ENCODE measurements at regions of chr5 and their contacts with region 1.

Region 1: GRCh38 chr5:56552612-56553268 is 262.6 kb upstream of the MAP3K1 start:
- DNase-seq: no peak

Region 2: GRCh38 chr5:56481428-56482357 is 71.0 kb before region 1 on chr5:
- intact Hi-C with region 1: no loop called
- DNase-seq: peak; percentile 72

Region 3: DNA sequence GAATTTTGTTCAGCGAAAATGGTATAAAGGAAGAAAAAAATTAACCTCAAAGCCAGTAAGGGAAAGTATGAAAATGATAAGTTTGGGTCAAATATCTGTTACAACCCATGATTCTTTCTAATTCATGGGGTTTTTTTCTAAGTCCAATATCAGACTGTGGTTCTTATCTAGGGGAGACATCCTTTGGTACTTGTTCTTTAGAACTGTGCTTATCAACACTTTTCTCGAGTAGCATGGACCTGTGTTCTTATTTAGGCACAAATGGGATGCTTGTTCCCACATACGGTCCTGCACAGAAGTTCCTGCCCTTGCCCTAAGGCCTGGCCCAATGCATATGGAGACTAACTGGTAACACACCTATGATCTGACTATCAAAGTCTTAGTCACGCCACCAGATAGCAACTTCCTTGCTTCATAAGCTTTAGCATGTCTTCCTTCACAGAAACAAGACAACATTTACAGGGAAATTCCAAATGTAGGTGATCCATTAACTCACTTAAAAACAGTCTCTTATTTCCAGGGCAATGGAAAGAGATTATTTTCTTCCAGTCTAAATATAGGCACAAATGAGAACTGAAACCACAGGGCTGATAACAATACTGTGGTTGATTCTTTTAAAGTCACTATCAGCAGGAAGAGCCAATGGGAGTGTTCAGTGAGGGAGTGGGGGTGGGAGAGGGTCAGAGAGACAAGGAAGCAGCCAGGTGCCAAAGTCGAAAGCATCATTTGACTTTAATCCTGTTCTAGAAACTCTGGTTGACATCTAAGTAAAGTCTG is 50.8 kb before region 1 on chr5:
- intact Hi-C with region 1: no loop called
- DNase-seq: no peak

Region 4: DNA sequence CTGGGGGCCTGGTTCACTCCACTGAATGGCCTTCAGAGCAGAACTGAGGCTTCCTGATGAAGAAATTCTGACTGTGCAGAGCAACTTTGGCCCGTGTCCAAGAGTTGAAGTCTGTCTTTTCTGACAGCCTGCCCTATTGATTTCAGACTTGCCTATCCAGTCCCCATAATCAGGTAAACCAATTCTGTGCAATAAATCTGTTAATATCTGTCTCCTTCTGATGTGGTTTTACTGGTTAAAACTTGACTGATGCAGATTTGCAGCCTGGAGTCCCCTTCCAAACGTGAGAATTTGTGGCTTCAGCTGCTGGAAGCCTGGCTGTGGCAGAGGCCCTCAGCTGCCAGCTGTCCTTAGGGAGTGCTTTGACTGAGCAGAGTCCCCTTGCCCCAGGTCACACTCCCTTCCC is 35.7 kb before region 1 on chr5:
- intact Hi-C with region 1: loop called in 1 of 2 experiments (anchors 1 kb)
- DNase-seq: no peak

Region 5: GRCh38 chr5:56565644-56566043 is 12.9 kb after region 1 on chr5:
- intact Hi-C with region 1: loop called in 1 of 2 experiments (anchors 1 kb)
- DNase-seq: no peak

Region 6: GRCh38 chr5:57009811-57010210 is 457.1 kb after region 1 on chr5:
- intact Hi-C with region 1: no loop called
- DNase-seq: no peak

Measured in posterior vena cava (tissue), 2 donors.